ENCODE measurements at regions of chr6 and their contacts with region 1.

Region 1: DNA sequence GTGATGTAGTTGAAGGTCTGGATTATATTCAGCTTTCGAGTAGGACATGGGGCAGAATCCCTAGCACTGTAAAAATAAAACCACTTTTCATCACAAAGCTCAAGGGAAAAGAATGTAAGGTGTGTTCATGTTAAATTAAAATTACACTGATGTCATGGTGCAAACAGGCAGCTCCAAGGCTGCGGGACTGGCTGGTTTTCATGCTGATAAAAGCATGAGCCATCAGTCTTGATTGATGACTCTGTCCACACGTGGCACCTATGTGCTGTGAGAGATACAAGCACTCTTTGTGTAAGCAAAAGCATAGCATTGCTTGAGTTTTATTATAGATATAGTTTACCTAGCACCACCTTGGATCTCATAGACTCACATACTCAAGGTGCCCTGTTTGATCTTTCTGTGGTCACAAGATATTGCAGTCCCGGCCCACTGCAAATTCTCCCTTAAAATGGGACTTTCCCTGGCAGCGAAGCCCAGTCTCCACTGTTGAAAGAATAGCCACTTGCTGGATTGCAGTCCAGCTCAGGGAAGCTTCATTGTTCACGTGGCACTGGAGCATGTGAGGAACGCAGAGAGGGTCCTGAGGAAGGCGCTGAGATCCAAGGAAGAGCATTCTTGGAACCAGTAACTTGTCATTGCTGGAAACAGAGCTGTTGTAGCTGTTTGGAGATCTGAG is 90.6 kb downstream of the TIAM2 start:
- DNase-seq: peak; percentile 59 to 91
- H3K4me3 ChIP-seq: no peak overlapping the region
- H3K27ac ChIP-seq: peak overlapping the region; percentile 56
- H3K4me1 ChIP-seq: peaks cover 18% of the 10 kb centered on the region
- H3K27me3 ChIP-seq: no peaks in the 10 kb centered on the region
- CTCF ChIP-seq: no peak

Region 2: DNA sequence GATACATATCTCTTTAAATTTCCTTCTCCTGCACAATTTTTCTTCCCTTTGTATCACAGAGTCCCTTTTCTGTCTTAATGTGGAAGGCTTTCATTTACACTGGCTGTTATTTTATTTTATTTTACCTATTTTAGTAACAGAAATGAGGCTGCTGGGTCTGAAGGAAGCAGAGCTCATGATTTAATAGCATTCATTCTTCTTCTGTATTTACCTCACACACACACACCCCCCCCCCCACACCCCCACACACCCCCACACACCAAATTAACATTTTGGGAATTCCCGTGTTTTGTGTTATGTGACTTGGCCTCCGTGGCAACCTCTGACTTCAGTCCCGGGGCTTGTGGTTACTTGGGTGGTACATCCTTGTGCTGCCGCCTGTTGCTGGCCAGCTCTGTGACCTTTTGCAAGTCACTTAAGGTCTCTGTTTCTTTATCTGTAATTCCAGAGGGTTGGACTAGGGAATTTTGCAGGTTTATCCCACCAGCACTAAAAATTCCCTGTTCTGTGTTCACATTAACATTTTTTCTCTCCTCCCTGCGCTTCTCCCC is 18.2 kb after region 1 on chr6:
- CTCF ChIA-PET with region 1: no interaction called
- POLR2A ChIA-PET with region 1: no interaction called
- intact Hi-C with region 1: loop called (anchors 1 kb)
- DNase-seq: no peak
- H3K4me3 ChIP-seq: no peak overlapping the region
- H3K27ac ChIP-seq: no peak overlapping the region
- H3K4me1 ChIP-seq: peaks cover 4% of the 10 kb centered on the region; the same call in 1 of the 2 replicates
- H3K27me3 ChIP-seq: no peaks in the 10 kb centered on the region
- CTCF ChIP-seq: no peak

Region 3: DNA sequence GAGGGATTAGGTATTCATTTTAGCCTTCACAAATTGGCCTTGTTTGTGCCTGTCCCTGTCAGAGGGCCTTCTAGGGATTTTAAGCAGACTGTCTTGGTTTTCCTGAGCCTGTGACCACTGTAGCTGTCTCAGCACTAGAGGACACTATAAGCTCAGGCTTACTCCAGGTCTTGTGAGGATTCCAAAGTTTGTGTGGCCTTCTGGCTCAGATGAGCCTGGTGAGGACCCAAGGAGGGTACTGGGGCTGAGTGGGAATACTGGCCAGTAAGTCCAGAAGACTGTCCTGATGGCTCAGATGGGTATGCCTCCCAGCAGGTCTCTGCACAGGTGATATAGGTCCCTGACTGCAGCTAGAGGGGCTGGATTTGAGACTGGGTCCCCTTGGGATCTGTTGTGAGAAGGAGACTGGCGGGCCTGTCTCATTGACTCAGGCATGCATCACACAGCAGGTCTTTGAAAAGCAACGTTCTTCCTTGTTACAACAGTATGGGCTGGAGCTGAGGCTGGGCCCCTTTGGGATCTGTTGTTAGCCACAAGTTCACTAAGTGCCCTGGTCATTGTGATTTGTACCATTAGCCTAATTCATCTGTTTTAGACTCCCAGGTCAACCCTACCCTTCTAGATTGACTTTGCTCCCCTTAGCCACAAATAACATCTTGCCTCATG is 254.9 kb after region 1 on chr6:
- CTCF ChIA-PET with region 1: no interaction called
- POLR2A ChIA-PET with region 1: no interaction called
- intact Hi-C with region 1: no loop called
- DNase-seq: no peak
- H3K4me3 ChIP-seq: no peak overlapping the region
- H3K27ac ChIP-seq: no peak overlapping the region
- H3K4me1 ChIP-seq: no peaks in the 10 kb centered on the region
- H3K27me3 ChIP-seq: no peaks in the 10 kb centered on the region
- CTCF ChIP-seq: no peak

Measured in PC-9 (cell line).